ENCODE measurements at regions of chr13 and their contacts with region 1.

Region 1: DNA sequence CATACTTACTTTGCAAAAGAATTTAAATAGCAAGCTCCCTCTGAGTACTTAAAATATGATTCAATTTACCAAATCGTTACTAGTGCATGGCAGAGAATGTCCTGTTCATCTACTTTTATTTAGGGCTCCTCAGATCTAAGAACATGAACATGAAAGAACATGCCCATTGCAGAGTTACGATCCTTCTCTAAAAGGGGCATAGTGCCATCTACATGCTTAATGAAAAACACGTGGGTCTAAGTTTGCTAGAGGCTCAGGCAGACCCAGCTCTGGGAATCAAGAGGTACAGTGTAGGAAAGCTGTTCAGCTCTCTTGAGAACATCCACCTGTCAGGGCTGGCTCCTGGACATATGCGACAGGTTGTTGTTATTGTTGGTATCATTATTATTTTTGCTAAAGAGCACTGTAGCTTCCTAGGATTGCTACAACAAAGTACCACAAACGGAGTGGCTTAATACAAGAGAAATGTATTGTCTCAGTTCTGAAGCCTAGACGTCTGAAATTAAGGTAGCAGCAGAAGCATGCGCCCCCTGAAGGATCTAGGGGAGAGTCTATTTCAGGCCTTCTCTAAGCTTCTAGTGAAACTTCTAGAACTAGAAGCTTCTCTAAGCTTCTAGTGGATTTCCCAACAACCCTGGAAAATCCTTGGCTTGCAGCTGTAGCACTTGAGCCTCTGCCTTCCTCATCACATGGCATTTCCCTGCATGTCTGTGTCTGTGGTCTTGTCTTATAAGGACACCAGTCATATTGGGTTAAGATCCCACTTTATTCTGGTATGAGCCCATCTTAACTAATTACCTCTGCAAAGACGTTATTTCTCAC is 133.9 kb downstream of the DCT start:
- DNase-seq: no peak
- ATAC-seq: no peak
- H3K4me3 ChIP-seq: no peak overlapping the region
- H3K27ac ChIP-seq: no peak overlapping the region
- H3K4me1 ChIP-seq: peaks cover 4 to 5% of the 10 kb centered on the region in 2 donors
- H3K27me3 ChIP-seq: no peaks in the 10 kb centered on the region

Region 2: GRCh38 chr13:92716749-92717148 is 1628.8 kb before region 1 on chr13:
- intact Hi-C with region 1: loop called in 1 of 2 experiments (anchors 10 kb)
- DNase-seq: no peak
- ATAC-seq: peak; percentile 41
- H3K4me3 ChIP-seq: no peak overlapping the region
- H3K27ac ChIP-seq: no peak overlapping the region
- H3K4me1 ChIP-seq: no peaks in the 10 kb centered on the region
- H3K27me3 ChIP-seq: no peaks in the 10 kb centered on the region

Region 3: GRCh38 chr13:93233997-93234416 is 1111.6 kb before region 1 on chr13:
- intact Hi-C with region 1: loop called (anchors 10 kb)
- DNase-seq: no peak
- ATAC-seq: peak; percentile 31
- H3K4me3 ChIP-seq: no peak overlapping the region
- H3K27ac ChIP-seq: no peak overlapping the region
- H3K4me1 ChIP-seq: no peaks in the 10 kb centered on the region
- H3K27me3 ChIP-seq: no peaks in the 10 kb centered on the region

Region 4: DNA sequence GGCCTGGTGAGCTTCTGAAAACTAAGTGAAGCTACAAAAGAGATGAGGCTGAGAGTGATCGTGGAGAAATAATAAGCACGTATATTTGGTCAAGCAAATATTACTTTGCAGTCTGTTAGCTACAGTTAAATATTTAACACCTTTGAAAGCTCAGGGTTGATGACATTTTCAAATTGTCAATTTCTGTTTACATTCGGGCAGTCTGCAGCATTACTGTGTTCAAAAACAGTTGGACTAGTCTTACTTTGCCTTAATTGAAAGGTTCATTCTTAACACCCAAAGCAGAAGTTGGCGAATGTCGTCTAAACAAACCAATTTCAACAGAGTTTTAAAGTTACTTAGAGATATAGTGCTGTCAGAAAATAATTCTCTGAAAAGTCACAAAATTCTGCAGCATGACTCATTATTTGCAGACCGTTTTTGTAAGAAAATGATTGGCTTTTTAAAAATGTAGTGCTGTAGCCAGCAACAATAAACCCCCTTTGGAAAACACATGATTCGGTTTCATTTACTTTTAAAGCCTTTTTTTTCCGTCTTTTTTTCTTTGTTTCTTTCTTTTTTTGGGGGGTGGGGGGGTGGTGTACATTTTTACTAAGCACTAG is 570.0 kb before region 1 on chr13:
- intact Hi-C with region 1: loop called in 1 of 2 experiments (anchors 10 kb)
- DNase-seq: no peak
- ATAC-seq: no peak
- H3K4me3 ChIP-seq: peak overlapping the region in 1 of 2 donors; percentile 26
- H3K27ac ChIP-seq: peak overlapping the region in 1 of 2 donors; percentile 36
- H3K4me1 ChIP-seq: peaks cover 3 to 13% of the 10 kb centered on the region in 2 donors
- H3K27me3 ChIP-seq: no peaks in the 10 kb centered on the region

Region 5: DNA sequence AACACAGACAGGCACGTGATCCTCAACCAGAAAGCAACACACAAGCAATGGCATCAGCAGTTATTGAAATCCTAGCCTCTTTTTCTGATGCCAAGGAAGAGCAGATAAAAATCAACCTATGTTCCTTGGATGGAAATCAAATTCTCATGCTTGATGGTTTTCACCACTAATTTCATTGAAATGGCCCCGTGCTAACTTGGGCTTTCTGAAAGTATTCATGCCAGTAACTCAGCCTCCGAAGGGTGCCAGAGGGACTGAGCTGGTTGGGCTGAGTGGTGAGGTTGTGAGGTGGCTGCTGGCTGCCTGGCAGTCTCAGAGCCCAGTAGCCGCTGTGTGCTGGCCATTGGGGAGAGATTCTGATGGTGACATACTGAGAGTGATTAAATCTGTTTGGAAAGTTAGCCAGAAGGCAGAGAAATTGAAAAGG is 175.4 kb before region 1 on chr13:
- intact Hi-C with region 1: loop called in 1 of 2 experiments (anchors 10 kb)
- DNase-seq: peak; percentile 79 to 85
- ATAC-seq: peak; percentile 81
- H3K4me3 ChIP-seq: no peak overlapping the region
- H3K27ac ChIP-seq: no peak overlapping the region
- H3K4me1 ChIP-seq: no peaks in the 10 kb centered on the region
- H3K27me3 ChIP-seq: no peaks in the 10 kb centered on the region

Region 6: DNA sequence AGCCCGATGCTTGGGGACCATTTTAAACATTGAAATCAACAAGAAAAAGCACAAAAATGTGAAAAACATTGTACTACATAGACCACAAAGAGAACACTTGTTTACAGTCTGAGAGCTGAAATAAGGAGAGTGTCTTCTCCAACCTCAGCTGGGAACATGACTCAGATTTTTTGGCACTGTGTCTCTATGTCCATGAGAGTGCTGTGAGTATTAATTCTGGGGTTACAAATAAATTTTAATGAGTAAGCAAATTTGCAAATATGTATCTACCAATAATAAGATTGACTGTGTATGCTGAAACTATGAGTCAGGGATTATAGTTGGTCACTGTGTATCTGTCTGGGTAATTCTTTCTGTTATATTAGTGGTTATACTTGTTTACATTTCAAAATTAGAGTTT is 40.1 kb before region 1 on chr13:
- intact Hi-C with region 1: no loop called
- DNase-seq: no peak
- ATAC-seq: peak; percentile 57
- H3K4me3 ChIP-seq: no peak overlapping the region
- H3K27ac ChIP-seq: no peak overlapping the region
- H3K4me1 ChIP-seq: peaks cover 0 to 2% of the 10 kb centered on the region in 2 donors
- H3K27me3 ChIP-seq: no peaks in the 10 kb centered on the region